ENCODE measurements at regions of chr12 and their contacts with region 1.

Region 1: GRCh38 chr12:88247241-88247643 is 105.1 kb downstream of the TMTC3 start:
- DNase-seq: peak; percentile 96
- ATAC-seq: peak; percentile 92
- H3K4me3 ChIP-seq: no peak overlapping the region
- H3K27ac ChIP-seq: peak overlapping the region; percentile 56
- H3K4me1 ChIP-seq: peaks cover 33% of the 10 kb centered on the region
- H3K27me3 ChIP-seq: no peaks in the 10 kb centered on the region
- CTCF ChIP-seq: no peak

Region 2: DNA sequence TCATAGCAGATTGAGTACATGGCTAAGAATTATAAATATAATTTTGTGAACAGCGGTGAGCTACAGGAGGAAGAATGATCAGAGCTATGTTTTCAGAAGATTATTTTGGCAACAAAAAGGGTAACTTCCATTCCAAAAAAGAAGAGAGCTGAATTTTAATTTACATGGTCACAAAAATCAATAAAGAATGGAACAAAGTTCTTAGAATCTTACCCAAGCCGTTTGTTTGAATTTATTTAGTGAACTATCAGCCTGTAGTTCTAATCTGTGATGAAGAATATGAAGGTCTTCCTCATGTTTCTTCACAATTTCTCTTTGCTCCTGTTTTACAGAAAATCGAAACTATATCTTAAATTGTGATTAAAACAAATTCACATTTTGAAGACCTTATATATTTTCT is 163.6 kb before region 1 on chr12:
- CTCF ChIA-PET with region 1: no interaction called
- POLR2A ChIA-PET with region 1: no interaction called
- intact Hi-C with region 1: no loop called
- DNase-seq: no peak
- ATAC-seq: no peak
- H3K4me3 ChIP-seq: no peak overlapping the region
- H3K27ac ChIP-seq: no peak overlapping the region
- H3K4me1 ChIP-seq: no peaks in the 10 kb centered on the region
- H3K27me3 ChIP-seq: no peaks in the 10 kb centered on the region
- CTCF ChIP-seq: no peak

Region 3: DNA sequence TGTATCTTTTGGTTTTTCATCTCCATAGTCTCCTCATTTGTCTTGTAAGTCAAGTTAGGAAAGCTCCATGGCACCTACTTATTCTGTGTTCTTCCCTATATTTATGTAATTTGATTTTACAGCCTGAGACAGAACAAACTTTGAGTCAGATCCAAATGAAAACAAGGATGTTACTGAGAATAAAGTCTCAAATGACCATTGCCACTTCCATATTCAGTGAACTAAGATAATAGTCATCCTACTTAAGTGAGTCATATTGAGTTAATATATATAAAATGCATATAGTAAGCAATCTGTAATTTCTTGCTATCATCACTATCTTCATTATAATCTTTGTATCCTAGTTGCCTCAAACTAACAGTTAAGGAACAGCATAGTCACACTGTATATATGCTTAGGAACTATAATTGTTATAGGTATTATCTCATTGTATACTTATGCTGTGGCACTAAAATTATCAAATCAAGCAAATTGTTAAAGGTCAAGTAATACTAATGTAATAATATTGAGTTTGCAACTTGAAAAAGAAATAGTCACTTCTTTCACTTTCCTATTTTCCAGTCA is 74.3 kb before region 1 on chr12:
- CTCF ChIA-PET with region 1: no interaction called
- POLR2A ChIA-PET with region 1: no interaction called
- intact Hi-C with region 1: loop called (anchors 1 kb)
- DNase-seq: peak; percentile 93
- ATAC-seq: peak; percentile 97
- H3K4me3 ChIP-seq: no peak overlapping the region
- H3K27ac ChIP-seq: peak overlapping the region; percentile 84
- H3K4me1 ChIP-seq: peaks cover 19% of the 10 kb centered on the region
- H3K27me3 ChIP-seq: no peaks in the 10 kb centered on the region
- CTCF ChIP-seq: no peak

Region 4: GRCh38 chr12:88192426-88192825 is 54.8 kb before region 1 on chr12:
- CTCF ChIA-PET with region 1: no interaction called
- POLR2A ChIA-PET with region 1: no interaction called
- intact Hi-C with region 1: no loop called
- DNase-seq: no peak
- ATAC-seq: no peak
- H3K4me3 ChIP-seq: no peak overlapping the region
- H3K27ac ChIP-seq: no peak overlapping the region
- H3K4me1 ChIP-seq: peaks cover 14% of the 10 kb centered on the region
- H3K27me3 ChIP-seq: no peaks in the 10 kb centered on the region
- CTCF ChIP-seq: no peak

Region 5: DNA sequence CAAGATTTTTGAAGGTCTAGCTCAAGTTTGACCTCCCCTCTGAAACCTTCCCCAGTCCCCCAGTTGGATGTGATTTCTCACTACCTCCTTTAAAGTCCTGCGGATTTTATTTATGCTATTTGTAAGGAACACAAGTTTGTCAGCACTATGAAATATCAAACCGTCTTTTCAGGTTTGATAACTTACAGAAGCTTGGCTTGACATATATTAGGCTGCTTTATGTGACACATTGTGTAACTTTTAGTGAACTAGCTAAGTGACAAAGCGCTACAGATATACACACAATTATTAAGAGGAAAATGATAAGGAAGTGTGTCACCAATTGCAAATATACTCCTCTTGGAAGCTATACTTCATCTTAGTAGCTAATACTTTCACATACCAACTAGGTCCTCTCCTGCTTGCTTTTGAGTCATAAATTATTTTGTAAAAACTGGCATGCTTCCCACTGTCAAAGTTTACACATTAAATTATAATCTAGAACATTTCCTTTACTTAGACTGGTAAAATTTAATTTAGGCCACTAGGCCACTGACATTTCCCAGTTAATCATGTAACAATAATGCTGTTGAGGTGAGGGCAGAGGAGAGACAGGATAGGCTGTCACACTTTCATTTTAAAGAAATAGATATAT is 44.4 kb after region 1 on chr12:
- CTCF ChIA-PET with region 1: no interaction called
- POLR2A ChIA-PET with region 1: interaction called, 3 read pairs
- intact Hi-C with region 1: loop called (anchors 2 kb)
- DNase-seq: peak; percentile 82
- ATAC-seq: peak; percentile 93
- H3K4me3 ChIP-seq: peak overlapping the region; percentile 36
- H3K27ac ChIP-seq: peak overlapping the region; percentile 76
- H3K4me1 ChIP-seq: peaks cover 17% of the 10 kb centered on the region
- H3K27me3 ChIP-seq: no peaks in the 10 kb centered on the region
- CTCF ChIP-seq: no peak

Region 6: GRCh38 chr12:88493636-88494035 is 246.4 kb after region 1 on chr12:
- CTCF ChIA-PET with region 1: no interaction called
- POLR2A ChIA-PET with region 1: no interaction called
- intact Hi-C with region 1: loop called (anchors 5 kb)
- DNase-seq: peak; percentile 95
- ATAC-seq: peak; percentile 73
- H3K4me3 ChIP-seq: 0 out of 2 replicates have a peak overlapping the region, but pooled peaks have one; percentile 21
- H3K27ac ChIP-seq: peak overlapping the region; percentile 61
- H3K4me1 ChIP-seq: peaks cover 40% of the 10 kb centered on the region
- H3K27me3 ChIP-seq: no peaks in the 10 kb centered on the region
- CTCF ChIP-seq: no peak

Region 7: DNA sequence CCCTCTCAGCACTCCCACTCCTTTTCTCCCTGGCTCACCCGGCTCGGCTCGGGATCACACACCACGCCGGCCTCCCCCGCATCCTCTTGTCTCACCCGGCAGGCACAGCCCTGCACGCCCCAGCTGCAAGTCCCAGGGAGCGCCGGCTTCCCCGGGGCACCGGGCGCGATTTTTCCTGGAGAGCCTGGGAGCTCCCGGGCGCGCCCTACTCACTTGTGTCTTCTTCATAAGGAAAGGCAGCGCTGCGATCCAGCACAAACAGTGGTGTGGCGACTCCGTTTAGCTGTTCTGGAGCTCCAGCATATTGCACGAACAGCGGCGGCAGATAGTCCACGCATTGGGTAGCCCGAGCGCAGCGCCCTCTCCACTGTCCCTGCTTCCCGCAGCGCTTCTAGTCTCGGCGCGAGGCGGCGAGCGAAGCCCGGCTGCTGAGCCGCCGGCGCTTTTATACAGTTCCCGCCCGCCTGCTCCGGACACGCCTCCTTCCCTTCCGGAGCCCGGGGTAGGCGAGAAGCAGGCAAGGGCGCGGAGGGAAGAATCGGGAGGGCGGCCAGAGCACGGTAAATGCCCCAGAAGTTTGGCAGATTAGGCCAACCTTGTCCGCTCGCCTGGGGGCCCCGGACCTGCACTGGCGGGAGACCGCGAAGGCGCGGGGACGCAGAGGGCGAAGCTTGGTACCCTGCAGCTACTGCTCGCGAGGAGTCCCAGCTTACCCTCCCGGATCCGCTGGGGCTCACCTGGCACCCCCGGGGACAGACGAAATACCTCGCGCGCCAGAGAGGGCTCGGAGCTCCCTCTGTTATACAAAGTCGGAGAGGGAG is 333.0 kb after region 1 on chr12 and contains the start of gene KITLG:
- CTCF ChIA-PET with region 1: no interaction called
- POLR2A ChIA-PET with region 1: no interaction called
- intact Hi-C with region 1: loop called (anchors 5 kb)
- DNase-seq: peak; percentile 91
- ATAC-seq: peak; percentile 77
- H3K4me3 ChIP-seq: peak within 1 kb of the TSS; percentile 94
- H3K27ac ChIP-seq: peak within 1 kb of the TSS; percentile 24
- H3K4me1 ChIP-seq: peaks cover 37% of the 10 kb centered on the region
- H3K27me3 ChIP-seq: no peaks in the 10 kb centered on the region
- CTCF ChIP-seq: peak; percentile 38; the same call in 1 of the 2 replicates
- total RNA-seq, gene KITLG: 8.4 and 14.9 TPM in 2 replicates

Measured in PC-3 (cell line).